Sigmoid colon (tissue), 7 donors: ENCODE measurements at regions of chr14 and their contacts with region 1.

Region 1: DNA sequence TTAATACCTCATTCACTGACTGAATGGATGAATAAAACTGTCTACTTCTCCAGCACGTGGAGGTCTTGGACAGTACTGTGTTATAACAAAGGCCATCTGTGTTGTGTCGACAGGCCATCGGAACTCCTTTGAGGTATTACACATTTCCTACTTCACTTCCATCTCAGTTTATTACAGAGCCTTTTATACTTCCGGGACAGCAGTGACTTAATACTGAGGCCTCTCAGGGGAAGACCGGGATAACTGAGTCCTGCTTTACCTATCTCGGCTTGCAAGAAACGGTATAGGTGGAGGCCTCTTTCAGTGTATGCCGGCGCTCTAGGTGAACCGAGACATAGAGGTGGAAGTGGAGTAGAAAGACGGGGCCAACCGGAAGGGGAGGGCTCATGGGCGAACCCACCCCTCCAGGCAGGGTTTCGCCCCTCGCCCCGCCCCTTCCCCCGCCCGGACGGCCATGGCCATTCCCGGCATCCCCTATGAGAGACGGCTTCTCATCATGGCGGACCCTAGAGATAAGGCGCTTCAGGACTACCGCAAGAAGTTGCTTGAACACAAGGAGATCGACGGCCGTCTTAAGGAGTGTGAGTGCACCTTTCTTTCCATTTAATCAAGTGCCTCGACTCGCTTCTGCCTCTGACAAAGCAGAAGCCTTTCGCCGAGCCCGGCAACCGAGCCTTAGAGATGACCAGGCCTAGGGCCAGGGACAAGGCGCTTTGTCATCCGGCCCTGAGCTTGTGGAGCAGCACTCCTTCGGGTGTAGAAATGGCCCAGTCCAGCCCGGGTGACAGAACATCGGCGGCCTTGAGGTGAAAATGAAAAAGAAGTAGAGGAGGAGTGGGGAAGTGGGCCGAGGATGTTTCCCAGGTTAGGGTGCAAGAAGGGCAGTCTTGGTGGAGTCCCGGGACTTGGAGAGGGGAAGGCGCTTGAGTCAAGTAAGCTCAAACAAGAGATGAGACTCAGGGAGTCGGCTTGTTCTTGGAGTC is at the start of gene PSMC6:
- DNase-seq: peak; percentile 96
- H3K4me3 ChIP-seq: peak within 1 kb of the TSS; percentile 68 to 81 (median 74)
- H3K27ac ChIP-seq: peak within 1 kb of the TSS; percentile 86 to 87 (median 87)
- H3K4me1 ChIP-seq: peaks cover 0 to 29% (median 16%) of the 10 kb centered on the region in 4 donors
- H3K27me3 ChIP-seq: no peaks in the 10 kb centered on the region
- CTCF ChIP-seq: no peak
- EP300 ChIP-seq: peak in 1 of 4 donors; percentile 21
- POLR2A ChIP-seq: peak; percentile 16 to 67
- total RNA-seq, gene PSMC6: 60.7 to 94.2 (median 86.4) TPM

Region 2: DNA sequence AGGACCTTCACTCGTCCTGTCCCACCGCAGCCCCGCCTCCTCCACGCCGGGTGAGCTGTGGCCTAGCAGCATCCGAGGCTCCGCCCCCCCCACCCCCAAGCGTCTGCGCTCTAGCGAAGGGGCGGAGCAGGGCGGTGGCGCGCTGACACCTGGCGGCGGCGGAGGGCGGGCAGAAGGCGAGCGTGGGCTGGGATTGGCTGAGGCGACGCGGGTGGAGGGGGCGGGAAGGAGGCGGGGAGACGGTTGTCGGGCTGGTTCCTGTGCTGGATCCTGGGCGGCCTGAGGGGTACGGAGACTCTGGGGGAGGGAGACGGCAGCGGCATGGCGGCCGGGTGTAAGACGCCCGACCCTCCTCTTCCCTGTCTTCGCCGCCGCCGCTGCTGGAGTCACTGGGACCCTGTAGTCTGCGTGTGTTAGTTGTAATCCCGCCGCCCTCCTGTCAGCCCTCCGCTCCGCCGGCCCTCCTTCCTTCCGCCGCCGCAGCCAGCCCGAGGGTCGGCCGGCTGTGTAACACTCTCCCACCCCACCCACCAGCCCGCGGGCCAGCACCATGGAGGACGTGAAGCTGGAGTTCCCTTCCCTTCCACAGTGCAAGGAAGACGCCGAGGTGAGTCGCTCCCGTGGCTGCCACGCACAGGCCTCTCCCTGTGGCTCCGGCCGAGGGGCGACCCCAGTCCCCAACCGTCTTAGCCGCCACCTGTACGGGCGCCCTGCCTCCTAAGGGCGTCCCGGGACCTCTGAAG is 23.1 kb after region 1 on chr14 and contains the start of gene STYX:
- intact Hi-C with region 1: loop called (anchors 2 kb)
- DNase-seq: peak; percentile 99
- H3K4me3 ChIP-seq: peak within 1 kb of the TSS; percentile 71 to 97 (median 78)
- H3K27ac ChIP-seq: peak within 1 kb of the TSS; percentile 86 to 94 (median 88)
- H3K4me1 ChIP-seq: peaks cover 0 to 11% (median 8%) of the 10 kb centered on the region in 4 donors
- H3K27me3 ChIP-seq: no peaks in the 10 kb centered on the region
- CTCF ChIP-seq: peak in 2 of 4 experiments; percentile 15 to 24
- EP300 ChIP-seq: no peak
- POLR2A ChIP-seq: peak; percentile 55 to 67
- total RNA-seq, gene STYX: 18.6 to 24.7 (median 23.0) TPM

Region 3: GRCh38 chr14:52944254-52944653 is 237.2 kb after region 1 on chr14:
- intact Hi-C with region 1: no loop called
- DNase-seq: no peak
- H3K4me3 ChIP-seq: no peak overlapping the region
- H3K27ac ChIP-seq: peak overlapping the region in 3 of 4 donors; percentile 3 to 99 (median 36)
- H3K4me1 ChIP-seq: peaks cover 0 to 98% (median 76%) of the 10 kb centered on the region in 4 donors
- H3K27me3 ChIP-seq: no peaks in the 10 kb centered on the region
- CTCF ChIP-seq: no peak
- EP300 ChIP-seq: no peak
- POLR2A ChIP-seq: no peak

Region 4: DNA sequence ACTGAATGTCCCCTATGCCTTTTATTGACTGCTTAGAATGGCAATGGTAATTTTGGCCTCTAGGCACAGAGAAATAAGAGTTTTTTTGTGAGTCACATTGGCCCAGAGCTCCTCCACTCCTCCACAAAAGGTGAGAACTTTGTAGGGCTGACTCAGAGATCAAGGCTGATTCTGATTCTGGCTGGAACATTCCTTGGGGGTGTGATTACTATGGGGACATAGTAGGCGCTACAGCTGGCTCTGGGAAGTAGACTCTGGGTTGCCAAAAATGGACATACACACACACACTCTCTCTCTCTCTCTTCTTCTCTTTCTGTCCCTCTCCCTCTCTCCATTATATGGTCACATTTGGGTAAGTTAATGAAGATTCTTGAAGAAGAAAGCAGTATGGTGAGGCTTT is 620.7 kb after region 1 on chr14:
- intact Hi-C with region 1: no loop called
- DNase-seq: no peak
- H3K4me3 ChIP-seq: no peak overlapping the region
- H3K27ac ChIP-seq: no peak overlapping the region
- H3K4me1 ChIP-seq: no peaks in the 10 kb centered on the region
- H3K27me3 ChIP-seq: no peaks in the 10 kb centered on the region
- CTCF ChIP-seq: no peak
- EP300 ChIP-seq: no peak
- POLR2A ChIP-seq: no peak